ENCODE measurements at regions of chr12 and their contacts with region 1.

Region 1: GRCh38 chr12:70719672-70720420 is 82.6 kb upstream of the PTPRB start:
- DNase-seq: peak; percentile 62
- H3K4me3 ChIP-seq: peak overlapping the region in 1 of 2 donors; percentile 2
- H3K27ac ChIP-seq: peak overlapping the region in 1 of 2 donors; percentile 36
- H3K4me1 ChIP-seq: no peaks in the 10 kb centered on the region
- H3K27me3 ChIP-seq: no peaks in the 10 kb centered on the region
- CTCF ChIP-seq: peak; percentile 47 to 84 (median 68)
- POLR2A ChIP-seq: no peak

Region 2: DNA sequence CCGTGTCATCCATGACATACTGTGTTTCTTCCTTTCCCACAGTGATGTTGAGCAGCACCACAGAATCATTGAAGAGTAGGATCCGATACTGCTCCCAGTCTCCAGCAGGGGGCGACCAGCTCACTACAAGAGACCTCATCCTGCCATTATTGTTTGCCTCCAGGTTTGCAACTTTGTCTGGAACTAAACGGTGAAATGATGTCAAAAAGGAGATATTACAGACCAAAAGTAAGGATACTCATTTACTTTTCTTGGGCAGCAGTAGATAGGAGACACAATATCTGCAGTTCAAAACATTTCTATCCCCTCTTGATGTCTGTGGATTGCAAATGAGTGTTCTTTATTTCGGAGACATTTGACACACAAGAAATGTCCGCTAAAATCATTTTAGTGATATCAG is 129.8 kb before region 1 on chr12:
- intact Hi-C with region 1: loop called (anchors 10 kb)
- DNase-seq: peak; percentile 89
- H3K4me3 ChIP-seq: no peak overlapping the region
- H3K27ac ChIP-seq: no peak overlapping the region
- H3K4me1 ChIP-seq: no peaks in the 10 kb centered on the region
- H3K27me3 ChIP-seq: no peaks in the 10 kb centered on the region
- CTCF ChIP-seq: peak; percentile 67 to 78 (median 77)
- POLR2A ChIP-seq: no peak

Region 3: DNA sequence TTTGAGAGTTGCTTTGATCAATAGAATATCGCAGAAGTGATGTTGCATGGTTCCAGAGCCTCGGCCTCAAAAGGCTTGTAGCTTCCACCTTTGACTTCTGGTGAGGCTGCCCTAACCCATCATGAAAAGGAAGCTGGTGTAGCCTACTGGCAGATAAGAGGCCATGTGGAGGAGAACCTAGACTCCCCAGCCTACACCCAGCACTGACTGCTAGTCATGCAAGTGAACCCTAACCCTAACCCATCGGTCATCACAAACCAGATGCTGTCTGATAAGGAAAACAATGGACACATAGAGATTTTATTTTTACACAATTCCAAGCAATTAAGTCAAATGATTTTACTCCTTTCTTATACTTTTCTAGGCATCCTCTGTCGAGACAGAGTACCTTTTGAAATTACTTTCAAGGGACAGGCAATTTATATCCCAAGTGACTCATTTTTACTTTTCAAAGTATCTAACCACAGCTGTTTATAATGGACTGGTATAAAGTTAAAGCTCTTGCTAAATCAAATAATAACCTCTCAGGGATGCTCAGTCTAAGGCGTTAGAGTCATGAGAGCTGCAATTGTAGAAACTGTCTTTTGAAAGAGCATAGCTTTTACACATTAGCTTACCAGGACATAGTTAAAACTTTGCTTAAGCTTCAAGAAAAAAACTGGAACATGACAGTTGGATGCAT is 100.2 kb before region 1 on chr12:
- intact Hi-C with region 1: no loop called
- DNase-seq: no peak
- H3K4me3 ChIP-seq: no peak overlapping the region
- H3K27ac ChIP-seq: no peak overlapping the region
- H3K4me1 ChIP-seq: no peaks in the 10 kb centered on the region
- H3K27me3 ChIP-seq: no peaks in the 10 kb centered on the region
- CTCF ChIP-seq: no peak
- POLR2A ChIP-seq: no peak